ENCODE measurements at regions of chr19 and their contacts with region 1.

Region 1: DNA sequence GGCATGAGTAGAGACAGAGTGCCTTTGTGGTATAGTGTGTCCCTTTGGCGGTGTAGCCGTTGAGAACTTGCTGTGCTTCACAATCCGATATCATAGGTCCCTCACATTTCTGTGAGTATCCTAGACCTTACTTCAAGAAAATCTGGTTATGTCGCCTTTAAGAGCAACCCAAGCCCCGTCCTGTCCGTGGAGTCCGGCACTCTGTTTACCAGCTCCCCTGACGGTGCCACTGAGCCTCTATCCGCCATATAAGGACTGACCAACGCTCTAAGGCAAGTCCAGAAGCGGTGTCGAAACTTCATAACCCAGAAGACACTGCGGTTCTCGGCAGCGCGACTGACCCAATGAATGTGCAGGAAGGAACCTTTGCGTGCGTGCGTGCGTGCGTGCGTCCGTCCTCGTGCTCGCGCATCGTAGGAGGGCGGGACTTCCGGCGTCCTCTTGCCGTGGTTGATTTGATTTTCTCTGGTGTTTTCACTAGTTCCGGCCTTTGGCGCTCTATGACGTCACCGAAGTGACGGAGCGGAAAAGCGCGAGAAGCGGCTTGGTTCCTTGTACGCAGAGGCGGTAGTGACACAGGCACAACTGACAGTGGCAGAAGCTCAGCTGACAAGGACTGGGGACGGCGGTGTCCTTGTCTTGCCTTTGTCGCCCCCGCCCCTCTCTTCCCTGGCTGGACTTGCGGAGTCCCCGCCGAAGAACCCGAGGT is at the starts of genes TRAPPC2B and ZNF547:
- DNase-seq: peak; percentile 99
- H3K4me3 Mint-ChIP-seq: peak within 1 kb of the TSS; percentile 91
- H3K27ac Mint-ChIP-seq: peak within 1 kb of the TSS; percentile 99
- H3K4me1 Mint-ChIP-seq: peaks cover 21% of the 10 kb centered on the region
- H3K27me3 Mint-ChIP-seq: no peaks in the 10 kb centered on the region
- CTCF ChIP-seq: no peak
- total RNA-seq, gene TRAPPC2B: 11.7 and 16.3 TPM in 2 replicates
- total RNA-seq, gene ZNF547: 7.2 and 7.7 TPM in 2 replicates

Region 2: DNA sequence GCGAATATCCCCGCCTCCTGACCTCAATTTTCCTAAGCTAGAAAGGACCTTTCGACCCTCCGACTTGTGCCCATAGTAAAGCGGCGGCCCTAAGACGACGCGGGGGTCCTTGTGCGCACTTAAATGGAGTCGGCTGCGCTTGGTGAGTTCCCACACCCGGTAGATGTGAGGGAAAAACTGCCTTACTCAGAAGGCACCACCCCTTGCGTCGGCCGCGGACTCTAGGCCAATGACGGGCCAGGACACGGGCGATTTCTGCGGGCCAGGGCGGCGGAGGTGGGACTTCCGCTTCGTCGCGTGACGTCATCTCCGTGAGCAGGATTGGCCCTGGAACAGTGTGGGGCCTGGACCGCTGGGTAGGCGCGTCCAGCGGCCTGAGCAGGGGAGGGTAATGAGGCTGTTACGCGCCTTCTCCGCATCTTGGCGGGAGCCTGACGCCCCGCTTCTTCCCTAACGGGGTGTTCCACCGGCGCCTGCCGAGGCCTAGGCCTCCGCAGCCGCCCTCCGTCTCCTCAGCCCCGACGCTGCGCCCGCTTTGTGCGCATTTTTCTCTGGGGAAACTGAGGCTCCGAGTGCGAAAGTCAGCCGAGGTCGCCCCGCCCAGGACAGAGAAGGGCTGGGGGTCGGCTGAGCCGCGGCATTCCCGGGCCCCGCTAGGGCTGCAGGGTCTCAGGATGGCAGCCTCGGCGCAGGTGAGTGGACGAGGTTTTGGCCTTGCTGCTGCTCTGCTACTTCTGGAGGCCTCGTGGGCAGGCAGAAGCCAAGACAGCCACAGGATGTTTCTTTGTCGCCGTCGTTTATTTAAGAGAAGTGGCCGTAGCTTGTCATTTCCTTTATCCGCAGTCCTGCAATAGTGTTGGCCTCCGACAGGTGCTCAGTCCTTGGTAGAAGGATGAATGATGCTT is 42.7 kb before region 1 on chr19 and contains the start of gene ZNF543:
- CTCF ChIA-PET with region 1: no interaction called
- intact Hi-C with region 1: loop called (anchors 5 kb)
- DNase-seq: peak; percentile 97
- H3K4me3 Mint-ChIP-seq: peak within 1 kb of the TSS; percentile 74
- H3K27ac Mint-ChIP-seq: peak within 1 kb of the TSS; percentile 70
- H3K4me1 Mint-ChIP-seq: peaks cover 24% of the 10 kb centered on the region
- H3K27me3 Mint-ChIP-seq: peaks cover 18% of the 10 kb centered on the region
- CTCF ChIP-seq: no peak
- total RNA-seq, gene ZNF543: 8.5 and 9.0 TPM in 2 replicates

Measured in Calu3 (cell line).